ENCODE measurements at regions of chr7 and their contacts with region 1.

Region 1: DNA sequence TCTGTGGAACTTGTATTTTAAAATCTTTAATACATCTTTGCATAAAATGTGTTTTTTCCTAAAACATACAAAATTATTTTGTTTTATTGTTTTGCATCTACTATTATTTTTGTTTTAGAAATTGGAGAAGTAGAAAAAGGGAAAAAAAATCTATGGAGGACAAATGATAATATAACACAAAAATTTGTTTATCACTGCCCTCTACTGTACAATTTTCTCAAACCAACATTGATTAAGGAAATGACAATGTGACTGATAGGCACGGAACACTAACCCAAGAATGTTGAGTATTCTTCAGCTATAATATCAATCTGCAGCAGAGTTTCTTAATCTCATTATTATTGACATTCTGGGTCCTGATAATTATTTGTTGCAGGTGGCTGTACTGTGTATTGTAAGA is 9.5 kb upstream of the ING3 start:
- DNase-seq: no peak

Region 2: DNA sequence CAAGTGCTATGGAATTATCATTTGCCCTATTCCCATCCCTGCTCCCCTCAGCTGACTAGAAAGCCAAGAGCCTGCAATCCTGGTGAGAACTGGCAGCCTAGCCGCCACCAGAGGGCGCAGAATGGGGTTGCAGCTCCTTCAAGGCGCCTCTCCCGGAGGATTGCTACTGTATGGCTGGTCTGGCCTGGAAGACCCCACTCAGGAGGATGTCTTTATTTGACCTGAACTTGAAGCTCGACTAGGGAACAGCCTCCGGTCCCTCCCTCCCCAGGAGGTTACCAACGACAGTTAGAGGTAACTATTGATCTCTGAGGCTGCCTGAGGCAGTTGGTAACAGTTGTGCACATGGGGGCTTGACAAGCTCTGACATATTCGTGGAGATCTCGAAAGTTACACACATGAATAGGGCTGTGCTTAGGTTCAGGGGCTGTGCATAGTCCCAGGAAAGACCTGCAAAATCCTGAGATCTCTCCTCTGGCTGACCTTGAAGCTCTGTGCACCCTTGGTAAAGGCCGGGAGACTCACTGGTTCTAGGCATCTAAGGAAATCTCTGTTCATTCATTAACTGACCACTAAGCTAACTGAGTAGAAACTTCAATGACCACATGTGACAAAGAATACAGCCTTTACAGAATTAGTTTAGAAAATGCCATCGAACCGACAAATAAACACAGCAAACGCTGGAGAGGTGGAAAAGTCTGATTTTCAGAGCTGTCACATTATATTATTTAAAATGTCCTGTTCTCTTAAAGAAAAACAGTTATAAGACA is 148.8 kb before region 1 on chr7:
- intact Hi-C with region 1: loop called in 1 of 2 experiments (anchors 10 kb)
- DNase-seq: peak; percentile 91

Region 3: GRCh38 chr7:120799813-120800475 is 141.1 kb before region 1 on chr7:
- intact Hi-C with region 1: loop called (anchors 5 to 10 kb)
- DNase-seq: no peak

Region 4: DNA sequence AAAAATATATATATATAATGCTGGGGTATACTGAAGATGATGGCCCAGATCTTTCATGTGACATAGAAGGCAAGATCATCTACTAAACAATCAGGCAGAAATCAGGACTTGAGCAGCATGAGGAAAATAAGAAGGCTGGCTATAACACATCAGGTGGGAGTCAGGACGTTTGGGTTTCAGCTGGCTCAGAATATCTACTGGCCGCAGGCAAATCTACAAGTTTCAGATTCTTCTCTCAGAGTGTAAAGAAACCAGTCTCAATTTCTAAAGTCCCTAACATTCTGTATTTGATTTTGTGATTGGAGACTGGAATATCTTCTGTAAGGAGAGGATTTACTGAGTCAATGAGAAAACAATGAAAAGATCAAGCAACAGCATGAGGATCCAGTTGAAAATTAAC is 492.7 kb after region 1 on chr7:
- intact Hi-C with region 1: no loop called
- DNase-seq: no peak